ENCODE measurements at regions of chr9 and their contacts with region 1.

Region 1: DNA sequence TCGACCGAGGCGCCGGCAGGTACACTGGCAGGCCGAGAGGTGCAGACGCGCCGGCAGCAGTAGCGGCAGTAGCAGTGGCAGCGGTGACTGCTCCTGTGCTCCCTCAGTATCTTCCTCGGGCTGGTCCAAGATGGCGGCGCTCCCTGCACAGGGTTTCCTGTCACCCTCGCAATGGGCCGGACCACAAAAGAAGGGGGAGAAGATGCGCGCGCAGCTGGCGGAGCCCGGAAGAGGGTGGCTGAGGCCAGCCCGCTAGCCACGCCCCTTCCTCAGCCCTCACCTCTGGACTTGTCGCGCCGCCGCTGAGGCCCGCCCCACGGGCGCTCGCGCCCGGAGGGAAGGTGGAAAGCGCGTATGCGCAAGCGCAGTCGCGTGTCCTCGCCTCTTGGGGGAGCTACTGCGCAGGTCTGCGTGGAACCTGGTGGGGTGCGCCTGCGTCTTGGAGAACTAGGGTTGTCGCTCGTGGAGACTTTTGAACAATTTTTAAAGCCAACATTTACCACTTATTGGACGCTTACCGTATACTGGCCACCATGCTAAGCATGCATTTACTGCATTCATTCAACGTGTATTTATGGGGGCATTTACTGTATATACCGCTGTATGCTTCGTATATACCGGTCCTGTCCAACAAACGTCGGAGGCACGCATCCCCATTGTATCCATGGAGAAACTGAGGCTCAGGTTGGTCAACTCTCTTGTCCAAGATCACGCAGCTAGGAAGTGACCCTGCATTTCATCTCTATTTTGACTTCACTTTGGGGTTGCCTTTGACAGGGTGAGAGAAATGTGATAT is at the start of gene RAB14:
- DNase-seq: peak; percentile 100
- ATAC-seq: peak; percentile 90
- H3K4me3 ChIP-seq: peak within 1 kb of the TSS; percentile 77 to 79
- H3K4me3 Mint-ChIP-seq: peak within 1 kb of the TSS; percentile 96
- H3K27ac ChIP-seq: peak within 1 kb of the TSS; percentile 79 to 82
- H3K27ac Mint-ChIP-seq: peak within 1 kb of the TSS; percentile 97
- H3K4me1 ChIP-seq: peaks cover 41% of the 10 kb centered on the region
- H3K4me1 Mint-ChIP-seq: peaks cover 53% of the 10 kb centered on the region
- H3K27me3 ChIP-seq: no peaks in the 10 kb centered on the region
- H3K27me3 Mint-ChIP-seq: no peaks in the 10 kb centered on the region
- CTCF ChIP-seq: no peak
- total RNA-seq, gene RAB14: 58.8 to 60.4 TPM

Region 2: DNA sequence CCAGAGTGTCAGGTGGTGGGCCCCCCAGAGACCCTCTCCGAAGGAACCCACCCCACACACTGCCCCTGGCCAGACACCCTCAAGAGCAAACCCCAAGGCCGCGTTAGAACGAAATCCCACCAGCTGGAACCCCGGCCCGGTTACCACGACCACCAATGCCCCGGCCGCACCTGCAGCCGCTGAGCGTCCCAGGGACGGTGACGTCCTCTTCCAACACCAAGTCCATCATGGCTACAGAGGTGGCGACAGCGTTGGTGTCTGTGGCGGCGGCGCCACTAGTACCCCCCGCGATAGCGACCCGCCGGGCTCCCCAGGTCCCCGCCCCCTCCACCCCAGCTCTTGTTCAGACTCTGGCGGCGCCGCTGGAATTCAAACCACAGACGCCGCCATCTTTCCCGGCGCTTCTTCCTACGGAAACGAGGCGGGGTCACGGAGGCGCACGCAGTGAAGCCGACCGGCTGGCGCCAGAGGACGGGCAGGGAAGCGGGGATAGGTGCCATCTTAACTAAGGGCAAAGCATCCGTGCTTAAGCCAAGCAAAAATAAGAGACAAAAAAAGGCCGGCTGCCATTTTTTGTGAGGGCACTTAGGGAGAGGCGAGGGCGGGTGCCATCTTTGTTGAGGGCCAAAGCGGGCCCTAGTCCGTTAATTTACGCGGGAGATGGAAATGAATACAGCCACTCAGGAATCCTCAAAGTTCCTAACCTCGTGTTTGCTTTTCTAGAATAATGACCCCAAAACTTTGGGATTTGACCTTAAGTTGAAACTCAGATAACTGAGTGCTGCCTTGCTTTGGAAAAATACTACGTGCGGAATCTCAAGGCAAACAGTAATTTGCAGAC is 622.0 kb before region 1 on chr9 and contains the start of gene CDK5RAP2:
- CTCF ChIA-PET with region 1: no interaction called
- POLR2A ChIA-PET with region 1: no interaction called
- intact Hi-C with region 1: loop called in 1 of 2 experiments (anchors 5 kb)
- DNase-seq: peak; percentile 83 to 98 (median 91)
- ATAC-seq: peak; percentile 98
- H3K4me3 ChIP-seq: peak within 1 kb of the TSS; percentile 63 to 86
- H3K4me3 Mint-ChIP-seq: peak within 1 kb of the TSS; percentile 92
- H3K27ac ChIP-seq: peak within 1 kb of the TSS; percentile 68 to 77
- H3K27ac Mint-ChIP-seq: peak within 1 kb of the TSS; percentile 95
- H3K4me1 ChIP-seq: peaks cover 25% of the 10 kb centered on the region
- H3K4me1 Mint-ChIP-seq: peaks cover 56% of the 10 kb centered on the region
- H3K27me3 ChIP-seq: no peaks in the 10 kb centered on the region
- H3K27me3 Mint-ChIP-seq: no peaks in the 10 kb centered on the region
- CTCF ChIP-seq: no peak
- total RNA-seq, gene CDK5RAP2: 52.1 to 55.2 TPM

Region 3: DNA sequence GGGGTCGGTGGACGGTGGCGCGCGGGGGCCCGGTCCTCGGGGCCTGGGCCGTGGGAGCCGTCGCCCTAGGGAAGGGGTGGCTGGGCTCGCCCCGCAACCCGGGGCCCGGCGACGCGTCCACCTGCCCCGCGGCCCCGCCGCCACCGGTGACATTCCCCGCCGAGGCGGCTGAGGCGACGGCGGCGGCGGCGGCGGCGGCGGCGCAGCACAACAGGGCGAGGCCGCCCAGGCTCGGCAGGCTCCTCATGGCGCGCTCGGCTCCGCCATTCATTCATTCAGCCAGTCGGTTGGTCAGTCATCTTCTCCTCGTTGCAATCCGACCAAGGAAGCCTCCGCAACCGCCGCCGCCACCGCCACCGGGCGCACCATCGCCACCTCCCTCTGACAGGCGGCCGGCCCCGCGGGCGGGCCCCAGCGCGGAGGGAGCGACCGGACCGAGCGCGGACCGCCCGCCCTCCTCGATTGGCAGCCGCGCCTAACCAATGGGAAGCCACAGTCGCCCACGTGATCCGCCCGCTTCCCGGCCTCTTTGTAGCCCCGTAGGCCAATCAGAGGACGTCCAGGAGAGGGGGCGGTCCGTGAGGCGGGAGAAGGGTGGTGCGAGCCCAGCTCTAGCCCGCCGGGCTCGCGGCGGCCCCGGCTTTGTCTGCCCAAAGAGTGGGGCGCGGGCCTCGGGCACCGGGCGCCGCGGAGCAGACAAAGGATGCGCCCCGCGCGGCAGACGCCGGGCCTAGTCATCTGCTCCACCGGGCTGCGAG is 487.7 kb before region 1 on chr9 and contains the start of gene MEGF9:
- CTCF ChIA-PET with region 1: no interaction called
- POLR2A ChIA-PET with region 1: interaction called, 3 read pairs
- intact Hi-C with region 1: loop called (anchors 1 to 5 kb)
- DNase-seq: peak; percentile 89 to 98 (median 96)
- ATAC-seq: peak; percentile 94
- H3K4me3 ChIP-seq: peak within 1 kb of the TSS; percentile 69 to 92
- H3K4me3 Mint-ChIP-seq: peak within 1 kb of the TSS; percentile 83
- H3K27ac ChIP-seq: peak within 1 kb of the TSS; percentile 61 to 64
- H3K27ac Mint-ChIP-seq: peak within 1 kb of the TSS; percentile 86
- H3K4me1 ChIP-seq: peaks cover 38% of the 10 kb centered on the region
- H3K4me1 Mint-ChIP-seq: peaks cover 35% of the 10 kb centered on the region
- H3K27me3 ChIP-seq: no peaks in the 10 kb centered on the region
- H3K27me3 Mint-ChIP-seq: no peaks in the 10 kb centered on the region
- CTCF ChIP-seq: no peak
- total RNA-seq, gene MEGF9: 3.0 to 3.1 TPM

Region 4: DNA sequence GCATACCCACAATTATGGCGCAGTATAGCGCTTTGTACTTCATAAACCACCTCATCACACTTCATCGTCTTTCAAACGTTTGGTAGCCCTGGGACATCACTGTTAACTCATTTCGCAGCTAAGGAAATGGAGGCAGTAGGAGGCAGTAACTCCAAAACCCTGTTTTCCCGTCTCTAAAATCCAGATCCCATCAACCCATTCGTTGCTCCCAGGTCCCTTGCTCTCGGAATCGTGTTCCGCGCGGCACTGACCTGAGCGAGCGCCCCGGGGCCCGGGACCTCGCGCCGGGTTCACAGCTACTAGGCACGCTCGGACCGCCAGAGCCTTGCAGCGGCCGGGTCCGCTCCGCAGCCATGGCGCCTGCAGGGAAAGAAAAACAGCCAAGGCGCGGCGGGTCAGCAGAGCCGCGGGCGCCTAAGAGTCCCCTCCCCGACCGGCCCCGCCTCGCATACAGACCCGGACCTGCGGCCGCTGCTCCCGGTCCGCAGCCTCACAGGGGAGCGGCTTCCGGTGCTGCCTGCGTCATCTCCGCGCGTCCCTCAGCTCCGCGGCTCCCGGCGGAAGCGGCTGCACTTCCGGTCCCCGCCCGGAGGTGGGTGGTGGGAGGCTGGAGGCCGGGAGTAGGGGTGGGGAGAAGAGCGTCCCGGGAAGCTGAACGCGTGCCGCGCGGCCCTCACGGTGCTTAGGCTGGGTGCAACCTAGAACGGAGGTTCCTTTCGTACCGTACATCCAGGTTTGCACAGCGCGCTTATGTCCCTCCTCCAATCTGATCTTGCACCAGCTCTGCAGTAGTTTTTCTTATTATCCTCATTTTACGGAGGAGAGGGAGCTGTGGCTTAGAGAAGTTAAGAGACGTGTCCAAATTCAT is 408.8 kb before region 1 on chr9 and contains the start of gene FBXW2:
- CTCF ChIA-PET with region 1: no interaction called
- POLR2A ChIA-PET with region 1: interaction called, 3 read pairs
- intact Hi-C with region 1: loop called (anchors 1 to 5 kb)
- DNase-seq: peak; percentile 50 to 93 (median 84)
- ATAC-seq: peak; percentile 81
- H3K4me3 ChIP-seq: peak within 1 kb of the TSS; percentile 60 to 88
- H3K4me3 Mint-ChIP-seq: peak within 1 kb of the TSS; percentile 85
- H3K27ac ChIP-seq: peak within 1 kb of the TSS; percentile 88 to 90
- H3K27ac Mint-ChIP-seq: peak within 1 kb of the TSS; percentile 87
- H3K4me1 ChIP-seq: peaks cover 26% of the 10 kb centered on the region
- H3K4me1 Mint-ChIP-seq: peaks cover 60% of the 10 kb centered on the region
- H3K27me3 ChIP-seq: no peaks in the 10 kb centered on the region
- H3K27me3 Mint-ChIP-seq: no peaks in the 10 kb centered on the region
- CTCF ChIP-seq: no peak
- total RNA-seq, gene FBXW2: 51.9 to 54.7 TPM

Region 5: DNA sequence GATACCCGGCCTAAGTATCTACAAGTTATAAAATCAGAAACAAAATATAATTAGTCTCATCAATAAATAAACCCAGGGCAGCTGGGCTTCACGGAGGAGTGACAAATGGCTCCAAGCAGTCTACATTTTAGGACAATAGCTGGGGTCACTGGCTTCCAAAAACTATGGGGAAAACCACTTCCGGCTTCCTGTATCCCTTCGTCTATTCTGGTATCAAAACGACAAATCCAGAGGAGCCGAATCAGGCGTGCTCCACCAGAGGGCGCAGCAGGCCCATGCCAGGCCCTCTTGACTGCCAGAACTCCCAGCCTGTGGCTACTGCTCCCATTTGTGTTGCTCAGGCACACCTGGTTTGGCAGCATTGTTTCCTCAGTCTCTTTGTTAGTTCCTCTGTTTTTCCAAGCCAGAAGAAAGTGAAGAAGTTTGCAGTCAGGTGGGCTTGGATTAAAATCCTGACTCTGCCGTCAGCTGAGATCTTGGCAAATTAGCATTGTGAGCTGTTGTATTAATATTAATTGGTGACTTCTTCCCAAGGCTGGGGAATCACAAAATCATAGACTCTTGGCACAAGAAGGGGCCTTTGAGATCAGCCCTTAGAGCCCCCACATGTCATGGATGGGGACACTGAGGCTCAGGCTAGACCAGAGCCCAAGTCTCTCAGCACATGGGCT is 11.3 kb after region 1 on chr9:
- CTCF ChIA-PET with region 1: interaction called, 24 read pairs
- POLR2A ChIA-PET with region 1: interaction called, 5 read pairs
- intact Hi-C with region 1: loop called in 1 of 2 experiments (anchors 1 kb)
- DNase-seq: peak; percentile 27 to 75 (median 62)
- ATAC-seq: peak; percentile 52
- H3K4me3 ChIP-seq: no peak overlapping the region
- H3K4me3 Mint-ChIP-seq: no peak overlapping the region
- H3K27ac ChIP-seq: no peak overlapping the region
- H3K27ac Mint-ChIP-seq: no peak overlapping the region
- H3K4me1 ChIP-seq: no peaks in the 10 kb centered on the region
- H3K4me1 Mint-ChIP-seq: peaks cover 5% of the 10 kb centered on the region
- H3K27me3 ChIP-seq: no peaks in the 10 kb centered on the region
- H3K27me3 Mint-ChIP-seq: no peaks in the 10 kb centered on the region
- CTCF ChIP-seq: peak; percentile 89

Region 6: GRCh38 chr9:122144836-122145591 is 943.1 kb after region 1 on chr9:
- CTCF ChIA-PET with region 1: no interaction called
- POLR2A ChIA-PET with region 1: no interaction called
- intact Hi-C with region 1: no loop called
- DNase-seq: no peak
- ATAC-seq: no peak
- H3K4me3 ChIP-seq: no peak overlapping the region
- H3K4me3 Mint-ChIP-seq: no peak overlapping the region
- H3K27ac ChIP-seq: no peak overlapping the region
- H3K27ac Mint-ChIP-seq: peak overlapping the region; percentile 69
- H3K4me1 ChIP-seq: no peaks in the 10 kb centered on the region
- H3K4me1 Mint-ChIP-seq: peaks cover 3% of the 10 kb centered on the region
- H3K27me3 ChIP-seq: no peaks in the 10 kb centered on the region
- H3K27me3 Mint-ChIP-seq: no peaks in the 10 kb centered on the region
- CTCF ChIP-seq: no peak

Measured in CD8-positive, alpha-beta T cell (primary cell).